ENCODE measurements at regions of chr19 and their contacts with region 1.

Region 1: DNA sequence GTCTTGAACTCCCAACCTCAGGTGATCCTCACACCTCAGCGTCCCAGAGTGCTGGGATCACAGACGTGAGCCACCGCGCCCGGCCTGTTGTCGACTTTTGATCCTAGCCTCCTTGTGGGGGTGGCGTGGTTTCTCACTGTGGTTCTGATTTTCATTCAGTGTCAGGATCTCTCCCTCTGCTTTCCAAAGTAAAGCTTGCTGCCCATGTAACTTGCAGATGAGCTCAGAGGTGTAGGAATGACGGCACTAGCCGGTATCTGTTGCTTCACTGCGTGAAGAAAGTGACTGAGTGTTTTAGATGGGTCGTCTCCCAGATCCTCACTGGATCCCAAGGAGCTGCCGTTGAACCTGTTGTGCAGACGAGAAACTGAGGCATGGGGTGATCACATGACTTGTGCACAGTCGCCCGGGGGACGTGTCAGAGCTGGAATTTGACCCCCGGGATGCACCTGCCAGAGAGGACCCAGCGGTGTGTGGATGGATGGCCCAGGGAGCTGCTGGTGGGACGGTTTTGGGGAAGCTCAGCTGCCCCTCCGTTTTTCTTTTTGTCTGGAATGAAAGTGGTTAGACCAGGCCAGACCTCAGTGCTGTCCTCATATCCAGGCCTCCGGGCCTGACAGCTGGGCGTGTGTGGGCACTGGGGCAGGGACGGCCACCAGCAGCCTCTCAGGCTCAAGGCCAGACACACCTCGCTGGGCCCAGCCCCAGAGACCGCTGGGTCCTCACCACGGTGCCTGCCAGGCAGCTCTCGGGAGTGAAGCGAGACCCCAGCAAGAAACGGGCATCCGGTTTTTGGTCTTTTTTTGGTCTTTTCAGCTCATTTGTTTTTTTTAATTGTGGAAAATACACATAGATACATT is 12.5 kb downstream of the ARID3A start:
- H3K4me3 ChIP-seq: no peak overlapping the region
- H3K27ac ChIP-seq: no peak overlapping the region
- H3K4me1 ChIP-seq: no peaks in the 10 kb centered on the region
- CTCF ChIP-seq: no peak

Region 2: GRCh38 chr19:821825-822503 is 116.3 kb before region 1 on chr19 and contains the start of gene PLPPR3:
- CTCF ChIA-PET with region 1: no interaction called
- POLR2A ChIA-PET with region 1: no interaction called
- H3K4me3 ChIP-seq: peak within 1 kb of the TSS; percentile 36
- H3K27ac ChIP-seq: no peak within 1 kb of the TSS
- H3K4me1 ChIP-seq: no peaks in the 10 kb centered on the region
- CTCF ChIP-seq: no peak

Region 3: DNA sequence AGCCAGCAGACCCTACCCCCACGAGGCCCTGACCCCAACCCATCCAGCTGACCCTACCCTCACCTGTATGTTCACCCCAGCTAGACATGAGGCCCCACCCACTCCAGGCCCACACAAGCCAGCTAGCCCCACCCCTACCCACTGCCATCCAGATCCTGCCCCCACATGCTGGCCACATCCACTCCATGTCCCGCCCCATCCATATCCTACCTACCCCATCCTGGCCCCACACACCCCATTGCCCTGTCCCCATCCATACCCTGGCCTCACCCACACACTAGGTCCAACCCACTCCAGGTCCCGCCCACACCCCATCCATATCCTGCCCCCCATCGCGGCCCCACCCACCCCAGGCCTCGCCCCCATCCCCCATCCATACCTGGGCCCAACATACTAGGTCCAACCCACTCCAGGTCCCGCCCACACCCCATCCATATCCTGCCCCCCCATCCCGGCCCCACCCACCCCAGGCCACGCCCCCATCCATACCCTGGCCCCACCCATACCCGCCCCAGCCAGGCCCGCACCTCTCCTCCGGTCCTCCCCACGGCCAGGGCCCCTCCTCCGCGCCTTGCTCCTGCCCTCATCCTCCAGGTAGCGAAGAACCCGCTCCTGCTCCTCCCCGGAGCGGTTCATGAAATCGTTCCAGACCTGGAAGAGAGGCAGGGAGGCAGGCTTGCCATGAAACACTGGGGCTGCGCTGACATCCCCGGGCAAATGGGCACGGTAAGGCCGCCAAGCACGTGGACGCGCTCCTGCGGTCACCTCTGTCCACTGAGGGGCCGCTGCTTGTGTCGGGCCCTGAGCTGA is 37.8 kb before region 1 on chr19:
- CTCF ChIA-PET with region 1: no interaction called
- POLR2A ChIA-PET with region 1: no interaction called
- H3K4me3 ChIP-seq: no peak overlapping the region
- H3K27ac ChIP-seq: no peak overlapping the region
- H3K4me1 ChIP-seq: no peaks in the 10 kb centered on the region; the same call in 1 of the 2 replicates
- CTCF ChIP-seq: no peak

Region 4: GRCh38 chr19:961866-962620 is 23.8 kb after region 1 on chr19:
- CTCF ChIA-PET with region 1: interaction called, 3 read pairs
- POLR2A ChIA-PET with region 1: interaction called, 10 read pairs
- H3K4me3 ChIP-seq: no peak overlapping the region
- H3K27ac ChIP-seq: no peak overlapping the region
- H3K4me1 ChIP-seq: no peaks in the 10 kb centered on the region
- CTCF ChIP-seq: no peak

Region 5: DNA sequence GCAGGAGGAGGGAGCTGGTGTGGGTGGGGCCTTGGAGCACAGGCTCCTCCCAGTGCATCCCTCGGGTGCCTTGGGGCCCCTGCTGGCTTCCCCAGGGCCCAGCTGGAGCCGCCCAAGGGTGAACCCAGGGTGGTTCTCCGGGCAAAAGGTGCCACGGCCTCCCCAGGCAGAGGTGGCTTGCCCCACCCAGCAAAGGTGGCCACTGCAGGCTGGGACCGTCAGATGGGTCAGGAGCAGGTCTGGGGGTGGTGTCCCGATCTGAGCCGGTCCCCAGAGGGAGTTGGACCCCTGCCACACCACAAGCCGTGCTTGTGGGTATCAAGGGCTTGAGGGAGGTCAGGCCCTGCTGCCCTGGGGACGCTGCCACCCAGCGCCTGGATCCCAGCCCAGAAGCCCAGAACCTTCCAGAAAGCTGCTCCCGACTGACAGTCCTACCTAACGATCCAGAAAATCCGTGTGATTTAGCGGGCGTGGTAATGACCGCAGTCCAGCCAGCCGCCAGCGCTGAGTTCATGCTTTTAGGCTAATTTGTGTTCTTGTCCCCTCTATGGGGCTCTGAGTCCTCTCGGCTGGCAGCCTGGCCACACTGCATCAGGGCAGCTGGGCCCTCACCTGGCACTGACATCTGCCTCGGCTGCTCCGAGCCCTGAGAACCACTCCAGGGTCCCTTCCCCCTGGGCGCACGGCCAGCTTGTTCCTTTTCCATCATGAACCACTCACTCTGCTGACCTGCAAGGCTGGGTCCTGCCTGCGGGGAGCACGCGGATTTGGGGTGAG is 57.0 kb after region 1 on chr19:
- CTCF ChIA-PET with region 1: no interaction called
- POLR2A ChIA-PET with region 1: no interaction called
- H3K4me3 ChIP-seq: no peak overlapping the region
- H3K27ac ChIP-seq: no peak overlapping the region
- H3K4me1 ChIP-seq: peaks cover 7% of the 10 kb centered on the region
- CTCF ChIP-seq: no peak

Measured in HEK293 (cell line).